CD4-positive, alpha-beta memory T cell (primary cell): ENCODE measurements at regions of chr2 and their contacts with region 1.

Region 1: GRCh38 chr2:230913406-230914143 is 11.5 kb downstream of the GPR55 start:
- DNase-seq: peak in 1 of 5 donors; percentile 9
- H3K4me3 ChIP-seq: no peak overlapping the region
- H3K4me3 Mint-ChIP-seq: no peak overlapping the region
- H3K27ac ChIP-seq: no peak overlapping the region
- H3K27ac Mint-ChIP-seq: no peak overlapping the region
- H3K4me1 ChIP-seq: no peaks in the 10 kb centered on the region
- H3K4me1 Mint-ChIP-seq: peaks cover 2 to 14% (median 10%) of the 10 kb centered on the region in 4 donors
- H3K27me3 ChIP-seq: no peaks in the 10 kb centered on the region
- H3K27me3 Mint-ChIP-seq: peaks cover 1 to 5% of the 10 kb centered on the region in 2 donors

Region 2: DNA sequence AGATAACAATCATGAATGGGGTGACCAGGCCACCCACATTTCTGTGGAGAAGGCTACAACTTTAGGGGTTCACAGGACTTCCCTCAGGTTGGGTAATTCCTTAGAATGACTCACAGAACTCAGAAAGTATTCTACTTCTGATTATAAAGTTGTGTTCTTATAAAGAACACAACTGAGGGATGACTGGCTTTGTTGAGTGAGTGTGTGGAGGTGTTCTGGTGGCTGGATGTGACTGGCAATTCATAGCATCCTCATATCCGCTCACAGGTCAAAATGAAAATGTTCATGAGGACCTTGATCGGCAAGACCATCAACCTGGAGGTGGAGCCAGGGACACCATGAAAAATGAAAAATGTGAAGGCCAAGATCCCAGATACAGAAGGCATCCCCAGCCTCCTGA is 344.3 kb before region 1 on chr2:
- CTCF ChIA-PET with region 1: no interaction called
- POLR2A ChIA-PET with region 1: no interaction called
- intact Hi-C with region 1: no loop called
- DNase-seq: no peak
- H3K4me3 ChIP-seq: no peak overlapping the region
- H3K4me3 Mint-ChIP-seq: no peak overlapping the region
- H3K27ac ChIP-seq: no peak overlapping the region
- H3K27ac Mint-ChIP-seq: no peak overlapping the region
- H3K4me1 ChIP-seq: peaks cover 7% of the 10 kb centered on the region
- H3K4me1 Mint-ChIP-seq: peaks cover 0 to 10% (median 6%) of the 10 kb centered on the region in 4 donors
- H3K27me3 ChIP-seq: no peaks in the 10 kb centered on the region
- H3K27me3 Mint-ChIP-seq: no peaks in the 10 kb centered on the region

Region 3: DNA sequence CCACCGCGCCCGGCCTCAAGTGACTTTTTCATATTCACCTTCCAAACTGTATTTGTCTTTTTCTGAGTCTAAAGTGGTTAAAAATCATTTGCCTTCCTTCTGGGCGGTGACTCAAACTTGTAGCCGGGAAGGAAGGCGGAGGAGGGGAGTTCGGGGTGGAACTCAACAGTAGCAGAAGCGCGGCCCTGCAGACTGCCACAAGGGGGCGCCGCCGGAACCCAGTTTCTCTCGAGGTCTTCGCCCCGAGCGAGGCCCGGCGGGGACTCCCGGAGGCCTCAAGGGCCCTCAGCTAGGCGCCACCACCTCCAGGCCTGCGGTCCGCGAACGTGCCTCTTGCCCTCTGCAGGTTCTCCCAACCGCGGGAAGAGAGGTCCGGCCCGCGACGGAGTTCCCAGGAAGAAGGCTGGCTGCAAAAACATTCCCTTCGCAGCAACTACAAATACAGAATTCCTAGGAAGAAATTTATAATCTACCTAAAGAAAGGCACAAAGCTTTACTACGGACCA is 65.6 kb before region 1 on chr2:
- CTCF ChIA-PET with region 1: interaction called, 3 read pairs
- POLR2A ChIA-PET with region 1: no interaction called
- intact Hi-C with region 1: loop called (anchors 1 kb)
- DNase-seq: peak; percentile 74 to 82 (median 76)
- H3K4me3 ChIP-seq: no peak overlapping the region
- H3K4me3 Mint-ChIP-seq: peak overlapping the region in 6 of 8 donors; percentile 36 to 79 (median 50)
- H3K27ac ChIP-seq: no peak overlapping the region
- H3K27ac Mint-ChIP-seq: peak overlapping the region in 2 of 7 donors; percentile 27
- H3K4me1 ChIP-seq: peaks cover 8% of the 10 kb centered on the region
- H3K4me1 Mint-ChIP-seq: peaks cover 5 to 10% (median 7%) of the 10 kb centered on the region in 4 donors
- H3K27me3 ChIP-seq: no peaks in the 10 kb centered on the region
- H3K27me3 Mint-ChIP-seq: peaks cover 19 to 20% of the 10 kb centered on the region in 2 donors